BJ (cell line): ENCODE measurements at regions of chr13 and their contacts with region 1.

Region 1: DNA sequence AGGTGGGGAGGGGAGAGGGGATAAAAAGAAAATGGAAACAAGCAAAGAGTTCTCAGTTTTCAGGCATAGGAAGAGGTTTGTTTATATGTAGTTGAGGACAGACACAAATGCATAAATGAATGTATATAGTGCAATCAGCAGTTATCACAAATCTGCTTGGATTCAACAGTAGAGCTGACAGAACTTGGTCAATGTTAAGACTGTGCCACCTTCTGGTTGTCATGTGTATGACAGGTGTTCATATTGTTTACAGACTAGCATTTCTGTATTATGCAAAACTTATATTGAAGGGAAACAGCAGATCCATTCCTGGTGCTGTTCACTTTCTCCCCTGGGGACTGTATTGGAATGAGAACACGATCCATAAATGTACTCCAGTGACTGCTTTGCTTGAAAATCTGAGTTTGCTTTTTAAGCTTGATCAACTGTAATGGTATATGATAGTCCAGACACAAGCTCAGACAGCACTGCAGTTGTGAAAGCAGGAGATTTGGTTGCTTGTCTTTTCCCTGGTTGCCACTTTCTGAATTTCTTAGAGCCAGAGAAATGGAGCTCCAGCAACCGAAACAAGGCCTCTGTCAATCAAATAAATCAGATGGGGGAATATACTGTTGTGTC is 319.5 kb upstream of the OBI1 start:
- DNase-seq: peak; percentile 2
- H3K4me3 ChIP-seq: no peak overlapping the region
- H3K27me3 ChIP-seq: no peaks in the 10 kb centered on the region
- CTCF ChIP-seq: peak; percentile 67

Region 2: GRCh38 chr13:78131811-78132210 is 846.7 kb before region 1 on chr13:
- CTCF ChIA-PET with region 1: interaction called, 65 read pairs
- POLR2A ChIA-PET with region 1: no interaction called
- DNase-seq: no peak
- H3K4me3 ChIP-seq: no peak overlapping the region
- H3K27me3 ChIP-seq: no peaks in the 10 kb centered on the region; the same call in 1 of the 2 replicates
- CTCF ChIP-seq: peak; percentile 35

Region 3: DNA sequence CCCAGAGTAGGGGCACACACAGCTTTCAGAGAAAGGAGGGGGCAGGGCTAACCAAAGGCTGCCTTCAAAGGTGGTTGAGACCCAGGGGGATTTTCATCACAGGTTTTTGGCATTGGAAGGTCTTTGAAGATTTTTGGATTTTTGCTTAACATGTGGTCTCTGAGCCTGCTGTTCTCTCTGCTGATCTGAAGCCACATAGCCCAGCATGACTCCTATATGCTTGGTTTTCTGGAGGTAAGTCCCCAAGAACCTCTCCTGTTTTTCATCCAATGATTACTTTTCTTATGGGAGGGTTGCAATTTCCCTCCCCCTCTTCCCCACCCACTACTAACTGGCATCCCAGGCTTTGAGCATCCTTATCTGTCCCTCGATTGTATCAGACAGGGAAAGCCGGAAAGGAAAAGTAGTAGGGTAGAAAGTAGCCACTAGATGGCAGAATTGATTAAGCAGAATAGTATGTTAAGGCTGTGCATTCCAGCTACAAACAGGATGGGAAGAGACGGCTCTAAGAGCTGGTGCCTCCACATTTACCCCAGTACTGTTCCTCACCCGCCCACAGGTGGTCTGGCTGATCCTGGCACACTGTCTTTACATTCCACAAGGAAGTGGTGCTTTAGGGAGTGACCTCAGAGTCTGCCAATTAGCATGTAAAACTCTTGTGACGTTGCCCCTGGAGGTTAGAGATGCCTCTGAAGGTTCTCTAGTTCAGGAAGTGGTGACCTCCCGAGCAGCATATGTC is 840.9 kb before region 1 on chr13:
- CTCF ChIA-PET with region 1: interaction called, 65 read pairs
- POLR2A ChIA-PET with region 1: no interaction called
- DNase-seq: no peak
- H3K4me3 ChIP-seq: no peak overlapping the region
- H3K27me3 ChIP-seq: no peaks in the 10 kb centered on the region
- CTCF ChIP-seq: peak; percentile 76

Region 4: GRCh38 chr13:78960881-78961280 is 17.6 kb before region 1 on chr13:
- CTCF ChIA-PET with region 1: interaction called, 11 read pairs
- POLR2A ChIA-PET with region 1: no interaction called
- DNase-seq: no peak
- H3K4me3 ChIP-seq: no peak overlapping the region
- H3K27me3 ChIP-seq: no peaks in the 10 kb centered on the region
- CTCF ChIP-seq: no peak

Region 5: DNA sequence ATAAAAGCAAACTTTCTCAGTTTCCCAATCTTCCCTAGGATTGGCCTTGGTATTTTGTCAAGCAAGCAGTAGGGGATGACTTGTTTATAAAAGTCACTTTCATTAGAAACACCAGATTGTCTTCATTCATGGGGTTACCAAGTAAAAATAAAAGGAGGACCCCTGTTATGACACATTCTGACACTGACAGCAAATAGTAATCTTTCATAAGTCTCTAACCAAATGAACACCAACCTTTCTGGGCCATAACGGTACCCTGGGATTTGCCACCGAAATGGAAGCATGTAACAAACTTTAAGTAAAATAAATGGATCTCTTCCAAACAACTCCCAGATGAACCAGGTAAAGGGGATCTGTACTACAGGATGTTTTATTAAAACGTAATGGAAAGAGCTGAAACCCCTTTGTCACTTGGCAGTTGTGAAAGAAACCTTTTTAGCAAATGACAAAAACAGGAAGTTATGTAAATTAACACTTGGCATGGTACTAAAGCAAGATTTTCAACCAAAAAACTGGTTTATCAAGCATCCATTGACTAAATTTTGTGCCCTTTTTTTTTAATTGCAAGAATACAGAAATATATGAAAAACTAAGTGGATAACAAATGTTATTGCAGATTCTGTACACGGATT is 92.0 kb after region 1 on chr13:
- CTCF ChIA-PET with region 1: no interaction called
- POLR2A ChIA-PET with region 1: no interaction called
- DNase-seq: no peak
- H3K4me3 ChIP-seq: no peak overlapping the region
- H3K27me3 ChIP-seq: no peaks in the 10 kb centered on the region
- CTCF ChIP-seq: no peak

Region 6: DNA sequence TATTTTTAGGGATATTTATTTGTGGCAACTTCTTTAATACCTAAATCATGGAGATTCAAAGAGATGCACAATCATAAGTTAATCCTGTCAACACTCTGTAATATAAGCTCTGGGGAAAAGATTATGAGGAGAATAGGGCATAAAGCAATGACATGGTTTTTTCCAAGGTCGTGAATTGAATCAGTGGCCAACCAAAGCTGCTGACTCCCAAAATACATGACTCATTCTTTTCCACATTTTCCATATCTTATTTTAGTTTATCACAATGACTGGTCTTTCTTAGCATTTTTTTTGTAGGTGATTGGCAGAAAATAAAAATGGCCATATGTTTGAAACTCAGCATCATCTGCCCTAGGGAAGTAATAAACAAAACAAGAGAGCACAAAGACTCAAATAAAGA is 456.1 kb after region 1 on chr13:
- CTCF ChIA-PET with region 1: no interaction called
- POLR2A ChIA-PET with region 1: no interaction called
- DNase-seq: no peak
- H3K4me3 ChIP-seq: no peak overlapping the region
- H3K27me3 ChIP-seq: no peaks in the 10 kb centered on the region
- CTCF ChIP-seq: no peak